ENCODE measurements at regions of chr7 and their contacts with region 1.

Region 1: DNA sequence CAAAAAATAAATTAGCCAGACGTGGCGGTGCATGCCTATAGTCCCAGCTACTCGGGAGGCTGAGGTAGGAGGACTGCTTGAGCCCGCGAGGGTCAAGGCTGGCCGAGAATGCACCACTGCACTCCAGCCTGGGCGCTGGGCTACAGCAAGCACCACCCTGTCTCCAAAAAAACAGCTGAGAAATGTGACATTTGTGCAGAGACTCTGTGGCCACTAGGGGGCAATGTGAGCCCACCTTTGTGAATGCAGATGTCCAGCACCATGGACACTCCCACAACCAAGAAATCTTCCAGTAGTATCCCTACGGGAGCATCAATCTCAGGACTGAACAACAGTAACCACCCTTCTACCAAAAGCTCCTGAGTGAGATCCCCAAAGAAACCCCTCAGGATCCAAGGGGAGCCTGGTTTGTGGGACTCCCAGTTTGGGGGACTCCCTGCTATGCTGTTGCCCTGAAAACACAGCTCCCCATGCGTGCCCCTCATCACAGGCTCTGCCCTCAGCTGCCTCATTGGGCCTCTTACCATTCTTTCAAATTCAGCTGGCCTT is 6.2 kb upstream of the AHCYL2 start:
- DNase-seq: peak; percentile 86
- ATAC-seq: peak; percentile 85
- H3K4me3 Mint-ChIP-seq: no peak overlapping the region
- H3K27ac Mint-ChIP-seq: no peak overlapping the region
- H3K4me1 Mint-ChIP-seq: peaks cover 17% of the 10 kb centered on the region
- H3K27me3 Mint-ChIP-seq: no peaks in the 10 kb centered on the region

Region 2: DNA sequence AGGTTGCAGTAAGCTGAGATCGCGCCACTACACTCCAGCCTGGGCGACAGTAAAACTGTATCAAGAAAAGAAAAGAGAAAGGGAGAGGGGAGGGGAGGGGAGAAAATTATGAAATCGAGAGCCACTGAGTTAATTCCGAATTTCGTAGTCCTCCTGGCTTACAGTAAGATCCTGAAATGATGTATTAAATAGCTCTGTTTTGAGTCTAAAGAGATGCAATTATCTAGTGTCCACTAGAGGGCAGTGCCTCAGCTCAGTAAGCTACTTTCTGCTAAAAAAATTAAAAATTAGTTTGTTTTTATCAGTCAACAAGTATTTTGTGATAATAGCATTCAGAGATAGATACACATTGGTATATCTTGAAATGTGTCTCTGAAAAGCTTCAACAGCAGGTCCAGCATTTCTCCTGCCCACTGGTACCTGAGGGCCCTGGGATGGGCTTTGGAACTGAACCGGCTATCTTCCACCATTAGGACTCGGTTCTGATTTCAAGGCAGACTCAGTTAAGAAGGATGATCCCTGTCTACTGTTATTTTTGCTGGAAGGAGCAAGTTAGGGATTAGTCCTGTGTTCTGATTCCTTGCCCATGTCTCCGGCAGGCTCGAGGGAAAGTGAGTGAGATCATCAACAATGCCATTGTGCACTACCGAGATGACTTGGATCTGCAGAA is 54.6 kb before region 1 on chr7:
- CTCF ChIA-PET with region 1: interaction called, 81 read pairs
- POLR2A ChIA-PET with region 1: interaction called, 3 read pairs
- DNase-seq: peak; percentile 52
- ATAC-seq: no peak
- H3K4me3 Mint-ChIP-seq: no peak overlapping the region
- H3K27ac Mint-ChIP-seq: no peak overlapping the region
- H3K4me1 Mint-ChIP-seq: peaks cover 11% of the 10 kb centered on the region
- H3K27me3 Mint-ChIP-seq: no peaks in the 10 kb centered on the region

Region 3: DNA sequence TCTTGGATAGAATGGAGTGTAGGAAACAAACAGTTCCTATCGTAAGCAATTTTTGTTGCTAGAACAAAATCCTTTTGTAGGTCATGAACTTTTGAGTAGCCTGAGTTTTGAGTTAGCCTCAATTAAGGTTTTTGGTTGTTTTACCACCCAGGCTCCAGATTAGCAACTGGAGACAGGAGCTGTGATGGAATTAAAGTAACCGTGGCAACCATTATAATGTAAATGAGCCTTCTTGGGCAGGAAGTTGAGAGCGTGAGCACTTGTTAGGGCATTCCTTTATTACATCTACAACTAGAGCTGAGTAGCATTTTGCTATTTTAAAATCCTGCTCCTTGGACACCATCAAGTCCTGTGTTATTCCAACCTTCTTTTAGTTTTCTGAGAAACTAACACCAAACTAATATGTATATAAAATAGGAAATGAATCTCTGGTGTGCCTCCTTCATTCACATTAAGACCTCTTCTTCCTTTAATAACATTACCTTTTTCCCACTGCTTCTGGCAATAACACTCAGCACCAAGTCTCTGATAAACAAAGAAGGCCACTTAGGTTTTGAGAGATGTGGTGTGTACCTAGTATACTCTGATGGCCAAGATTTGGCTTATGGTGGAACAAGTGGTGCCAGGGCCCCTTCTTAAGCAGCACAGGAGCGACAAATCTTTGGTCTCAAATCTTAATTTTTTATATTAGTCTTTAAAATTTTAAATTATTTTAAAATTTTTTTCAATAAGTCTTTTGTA is 40.2 kb after region 1 on chr7:
- CTCF ChIA-PET with region 1: interaction called, 35 read pairs
- POLR2A ChIA-PET with region 1: no interaction called
- DNase-seq: no peak
- ATAC-seq: peak; percentile 23
- H3K4me3 Mint-ChIP-seq: no peak overlapping the region
- H3K27ac Mint-ChIP-seq: no peak overlapping the region
- H3K4me1 Mint-ChIP-seq: peaks cover 18% of the 10 kb centered on the region
- H3K27me3 Mint-ChIP-seq: no peaks in the 10 kb centered on the region

Region 4: GRCh38 chr7:129285111-129285510 is 66.5 kb after region 1 on chr7:
- CTCF ChIA-PET with region 1: interaction called, 26 read pairs
- POLR2A ChIA-PET with region 1: no interaction called
- DNase-seq: no peak
- ATAC-seq: no peak
- H3K4me3 Mint-ChIP-seq: no peak overlapping the region
- H3K27ac Mint-ChIP-seq: no peak overlapping the region
- H3K4me1 Mint-ChIP-seq: no peaks in the 10 kb centered on the region
- H3K27me3 Mint-ChIP-seq: no peaks in the 10 kb centered on the region

Region 5: GRCh38 chr7:129343099-129343700 is 124.6 kb after region 1 on chr7:
- CTCF ChIA-PET with region 1: interaction called, 11 read pairs
- POLR2A ChIA-PET with region 1: no interaction called
- DNase-seq: peak; percentile 44
- ATAC-seq: peak; percentile 52
- H3K4me3 Mint-ChIP-seq: no peak overlapping the region
- H3K27ac Mint-ChIP-seq: no peak overlapping the region
- H3K4me1 Mint-ChIP-seq: peaks cover 41% of the 10 kb centered on the region
- H3K27me3 Mint-ChIP-seq: no peaks in the 10 kb centered on the region

Region 6: DNA sequence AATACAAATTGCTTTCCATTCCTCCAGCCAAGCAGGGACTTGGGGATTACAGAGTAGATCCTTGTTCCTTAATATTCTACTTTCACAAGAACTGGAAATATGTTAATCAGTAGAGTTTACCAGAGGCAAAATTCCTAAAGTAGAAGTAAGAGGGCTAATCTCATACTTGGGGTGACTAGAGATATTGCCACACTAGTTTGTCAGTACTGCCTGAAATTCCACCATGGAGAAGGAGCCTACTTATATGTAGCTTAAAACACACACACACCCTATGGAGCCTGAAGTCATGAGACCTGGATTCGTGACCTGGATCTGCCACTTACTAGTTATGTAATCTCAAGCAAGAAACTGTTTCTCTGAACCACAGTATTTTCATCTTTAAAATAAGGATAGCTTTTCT is 249.5 kb after region 1 on chr7:
- CTCF ChIA-PET with region 1: interaction called, 14 read pairs
- POLR2A ChIA-PET with region 1: no interaction called
- DNase-seq: no peak
- ATAC-seq: no peak
- H3K4me3 Mint-ChIP-seq: no peak overlapping the region
- H3K27ac Mint-ChIP-seq: no peak overlapping the region
- H3K4me1 Mint-ChIP-seq: no peaks in the 10 kb centered on the region
- H3K27me3 Mint-ChIP-seq: no peaks in the 10 kb centered on the region